ENCODE measurements at regions of chr17 and their contacts with region 1.

Region 1: DNA sequence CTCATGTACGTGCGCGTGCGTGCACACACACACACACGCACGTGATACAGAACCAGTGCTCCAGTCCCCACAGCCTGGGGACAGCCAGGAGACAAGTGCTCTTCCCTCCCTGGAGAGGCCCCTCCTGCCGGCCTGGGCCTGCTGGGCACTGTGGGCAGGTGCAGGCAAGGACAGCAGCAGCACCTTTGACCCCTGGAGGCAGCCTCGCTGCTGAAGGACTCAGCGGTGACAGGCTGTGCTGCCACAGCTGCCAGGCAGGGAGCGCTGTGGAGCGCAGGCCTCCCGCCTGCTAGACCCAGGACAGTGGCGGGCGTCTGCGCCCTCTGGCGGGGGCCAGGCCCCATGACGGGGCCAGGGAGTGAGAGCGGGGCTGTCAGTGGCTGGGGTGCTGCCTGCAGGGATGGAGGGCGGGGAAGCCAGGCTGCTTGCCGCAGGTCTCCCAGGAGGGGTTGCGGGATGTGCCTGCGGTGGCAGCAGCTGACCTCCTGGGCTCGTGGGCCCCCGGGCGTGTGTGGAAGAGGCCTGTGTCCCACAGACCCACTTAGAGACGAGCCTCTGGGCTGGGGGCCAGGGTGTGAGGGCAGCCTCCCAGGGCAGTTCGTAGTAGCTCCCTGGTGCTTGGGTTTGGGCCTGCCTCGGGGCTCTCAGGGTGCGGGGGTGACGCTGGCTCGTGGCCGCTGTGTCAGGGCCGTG is 63.5 kb upstream of the PVALEF start:
- DNase-seq: peak; percentile 87
- H3K4me3 ChIP-seq: no peak overlapping the region
- H3K27ac ChIP-seq: no peak overlapping the region
- H3K4me1 ChIP-seq: peaks cover 0 to 32% (median 24%) of the 10 kb centered on the region in 4 donors
- H3K27me3 ChIP-seq: no peaks in the 10 kb centered on the region
- CTCF ChIP-seq: peak; percentile 100
- EP300 ChIP-seq: no peak
- POLR2A ChIP-seq: no peak

Region 2: DNA sequence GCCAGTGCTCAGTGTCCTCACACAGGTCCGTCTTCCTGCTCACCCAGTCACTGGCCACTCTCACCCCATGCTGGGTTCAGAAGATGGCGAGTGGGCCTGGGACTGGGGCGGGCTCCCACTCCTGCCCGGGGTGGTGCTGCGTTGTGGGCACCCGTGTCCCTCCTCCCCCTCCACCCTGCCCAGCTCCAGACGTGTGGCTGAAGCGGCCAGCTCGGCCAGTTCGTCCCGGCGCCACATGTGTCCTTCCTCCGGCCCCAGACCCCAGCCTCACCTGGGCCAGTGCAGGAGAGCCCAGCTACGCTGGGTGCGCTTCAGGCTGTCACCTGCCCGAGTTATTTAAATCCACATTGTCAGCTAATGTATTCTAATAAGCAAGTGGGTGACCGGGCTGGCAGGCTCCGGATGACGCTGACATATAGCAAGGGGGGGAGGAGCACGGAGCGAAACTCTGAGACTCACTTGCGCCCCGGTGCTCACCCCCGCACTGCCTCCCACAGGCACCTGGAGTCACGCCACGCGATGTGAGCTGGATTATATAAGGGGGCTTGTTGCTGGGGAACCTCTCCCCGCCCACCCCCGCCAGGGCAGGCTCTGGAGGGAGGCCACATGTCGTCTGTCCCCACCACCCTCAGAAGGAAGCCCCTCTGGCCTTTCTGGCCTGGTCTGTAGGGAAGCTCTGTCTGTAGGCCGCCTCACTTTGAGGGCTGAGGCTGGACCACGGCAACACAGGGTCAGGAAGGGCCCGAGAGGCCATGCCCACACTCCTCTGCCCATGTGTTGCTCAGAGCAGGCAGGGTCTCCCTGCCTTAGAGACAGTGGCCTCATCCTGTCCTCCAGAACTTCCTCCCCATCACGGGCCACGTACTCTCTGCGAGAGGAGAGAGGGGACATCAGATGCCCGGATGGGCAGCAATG is 73.9 kb before region 1 on chr17:
- intact Hi-C with region 1: loop called (anchors 2 kb)
- DNase-seq: peak; percentile 70
- H3K4me3 ChIP-seq: peak overlapping the region in 1 of 4 donors; percentile 11
- H3K27ac ChIP-seq: peak overlapping the region in 2 of 4 donors; percentile 67 to 72
- H3K4me1 ChIP-seq: peaks cover 0 to 47% (median 37%) of the 10 kb centered on the region in 4 donors
- H3K27me3 ChIP-seq: peaks cover 0 to 9% (median 0%) of the 10 kb centered on the region in 3 donors
- CTCF ChIP-seq: peak in 1 of 4 experiments; percentile 9
- EP300 ChIP-seq: no peak
- POLR2A ChIP-seq: no peak